Natural killer cell (primary cell): ENCODE measurements at regions of chr1 and their contacts with region 1.

Region 1: GRCh38 chr1:199243423-199244061 is 604.7 kb downstream of the PTPRC start:
- DNase-seq: peak; percentile 74 to 82
- ATAC-seq: peak; percentile 96 to 100 (median 100)
- H3K4me3 ChIP-seq: no peak overlapping the region
- H3K4me3 Mint-ChIP-seq: no peak overlapping the region
- H3K27ac ChIP-seq: no peak overlapping the region
- H3K27ac Mint-ChIP-seq: peak overlapping the region in 1 of 2 donors; percentile 65
- H3K4me1 ChIP-seq: peaks cover 9% of the 10 kb centered on the region
- H3K4me1 Mint-ChIP-seq: peaks cover 0 to 20% of the 10 kb centered on the region in 2 donors
- H3K27me3 ChIP-seq: no peaks in the 10 kb centered on the region
- H3K27me3 Mint-ChIP-seq: peaks cover 0 to 9% of the 10 kb centered on the region in 2 donors
- CTCF ChIP-seq: peak; percentile 85

Region 2: DNA sequence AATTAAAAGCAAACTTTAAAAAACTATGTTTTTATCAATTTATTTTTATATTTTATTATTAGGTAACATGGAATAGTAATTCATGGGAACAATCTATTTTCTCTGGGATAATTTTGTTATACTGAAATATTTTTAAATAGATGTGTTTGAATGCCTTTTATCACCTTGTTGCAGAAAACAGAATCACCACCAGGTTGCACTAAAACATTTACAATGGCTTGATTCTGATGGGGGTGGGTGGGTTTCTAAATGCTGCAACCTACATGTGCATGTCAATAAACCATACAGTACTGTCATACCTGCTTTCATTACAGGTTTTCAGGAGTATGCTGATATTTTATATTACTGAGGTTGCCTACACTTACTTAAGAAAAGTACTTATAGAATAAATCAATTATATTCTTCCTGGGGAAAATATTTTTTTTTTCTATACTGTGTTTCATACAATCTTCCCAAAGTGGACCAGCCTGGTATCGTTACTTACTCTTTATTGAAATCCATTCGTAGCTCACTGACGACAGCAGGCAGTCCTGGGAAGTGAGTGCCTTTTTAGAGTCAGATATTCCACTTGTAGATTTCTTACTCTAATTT is 471.9 kb before region 1 on chr1:
- intact Hi-C with region 1: loop called (anchors 5 kb)
- DNase-seq: peak in 1 of 2 donors; percentile 58
- ATAC-seq: peak in 2 of 3 donors; percentile 44 to 48
- H3K4me3 ChIP-seq: no peak overlapping the region
- H3K4me3 Mint-ChIP-seq: no peak overlapping the region
- H3K27ac ChIP-seq: no peak overlapping the region
- H3K27ac Mint-ChIP-seq: no peak overlapping the region
- H3K4me1 ChIP-seq: no peaks in the 10 kb centered on the region
- H3K4me1 Mint-ChIP-seq: peaks cover 4% of the 10 kb centered on the region in 2 donors
- H3K27me3 ChIP-seq: no peaks in the 10 kb centered on the region
- H3K27me3 Mint-ChIP-seq: no peaks in the 10 kb centered on the region
- CTCF ChIP-seq: peak; percentile 60

Region 3: DNA sequence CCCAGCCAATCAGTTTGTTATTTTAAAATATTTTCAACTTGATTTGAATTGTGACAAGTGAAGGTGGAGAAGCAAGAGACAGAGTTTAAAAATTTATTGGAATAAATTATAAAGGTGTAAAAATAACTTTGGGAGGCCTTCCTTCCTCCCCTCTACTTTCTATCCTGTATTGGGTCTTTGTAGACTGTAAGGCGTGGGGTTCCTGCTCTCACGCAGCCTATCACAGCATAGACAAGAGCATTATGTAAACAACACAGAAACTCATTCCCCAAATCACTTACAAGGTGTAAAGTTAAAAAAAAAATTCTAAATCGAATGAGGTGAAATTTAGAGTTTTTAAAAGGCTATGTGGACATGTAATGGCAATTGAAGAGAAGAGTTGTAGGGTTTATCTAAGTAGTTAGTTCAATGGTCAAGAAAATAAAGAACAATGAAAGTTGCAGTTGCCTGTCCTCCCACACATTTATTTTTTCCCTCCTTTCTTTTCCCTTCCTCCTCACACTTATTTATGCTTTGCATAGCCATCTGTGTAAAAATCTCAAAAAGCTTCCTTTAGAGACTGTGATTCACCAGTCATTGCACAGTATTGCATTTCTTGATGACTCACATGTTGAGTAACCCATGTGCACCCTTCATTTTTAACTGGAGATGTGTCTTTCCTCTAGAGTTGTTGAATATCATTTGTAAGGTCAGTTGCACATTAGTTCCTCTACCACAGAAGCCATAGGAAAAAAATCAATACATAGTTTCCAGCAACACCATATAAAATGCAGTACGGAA is 362.5 kb before region 1 on chr1:
- intact Hi-C with region 1: loop called (anchors 1 kb)
- DNase-seq: no peak
- ATAC-seq: peak; percentile 48 to 82 (median 54)
- H3K4me3 ChIP-seq: no peak overlapping the region
- H3K4me3 Mint-ChIP-seq: no peak overlapping the region
- H3K27ac ChIP-seq: no peak overlapping the region
- H3K27ac Mint-ChIP-seq: peak overlapping the region; percentile 34 to 64
- H3K4me1 ChIP-seq: no peaks in the 10 kb centered on the region
- H3K4me1 Mint-ChIP-seq: peaks cover 33 to 44% of the 10 kb centered on the region in 2 donors
- H3K27me3 ChIP-seq: no peaks in the 10 kb centered on the region
- H3K27me3 Mint-ChIP-seq: no peaks in the 10 kb centered on the region
- CTCF ChIP-seq: no peak

Region 4: GRCh38 chr1:199113265-199113869 is 130.2 kb before region 1 on chr1:
- intact Hi-C with region 1: loop called (anchors 1 kb)
- DNase-seq: peak; percentile 52 to 81
- ATAC-seq: peak; percentile 77 to 87 (median 84)
- H3K4me3 ChIP-seq: no peak overlapping the region
- H3K4me3 Mint-ChIP-seq: no peak overlapping the region
- H3K27ac ChIP-seq: no peak overlapping the region
- H3K27ac Mint-ChIP-seq: peak overlapping the region in 1 of 2 donors; percentile 9
- H3K4me1 ChIP-seq: no peaks in the 10 kb centered on the region
- H3K4me1 Mint-ChIP-seq: peaks cover 11 to 18% of the 10 kb centered on the region in 2 donors
- H3K27me3 ChIP-seq: no peaks in the 10 kb centered on the region
- H3K27me3 Mint-ChIP-seq: no peaks in the 10 kb centered on the region
- CTCF ChIP-seq: peak; percentile 95